Mammary epithelial cell (primary cell): ENCODE measurements at regions of chr10 and their contacts with region 1.

Region 1: DNA sequence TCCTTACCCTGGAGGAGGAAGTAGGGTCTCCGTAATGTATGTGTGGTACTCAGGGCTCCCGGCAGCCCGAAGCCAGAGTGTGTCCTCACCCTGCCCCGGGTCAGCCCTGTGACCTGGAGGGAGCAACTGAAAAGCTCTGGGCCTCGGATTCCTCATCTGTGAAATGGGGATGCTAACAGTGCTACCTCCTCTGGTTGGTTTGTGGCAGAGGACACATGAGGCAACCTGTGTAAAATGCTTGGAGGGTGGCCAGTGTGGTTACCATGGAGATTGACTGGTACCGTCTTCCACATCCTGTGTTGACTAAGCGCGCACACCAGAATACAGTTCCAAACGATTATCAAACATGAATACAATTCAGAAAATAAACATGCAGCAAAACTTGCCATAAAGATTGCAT is 163.8 kb upstream of the KLF6 start:
- DNase-seq: peak; percentile 33
- H3K4me3 ChIP-seq: no peak overlapping the region
- H3K27ac ChIP-seq: no peak overlapping the region
- H3K4me1 ChIP-seq: peaks cover 7% of the 10 kb centered on the region
- H3K27me3 ChIP-seq: no peaks in the 10 kb centered on the region
- CTCF ChIP-seq: no peak

Region 2: GRCh38 chr10:4067531-4067930 is 118.7 kb after region 1 on chr10:
- CTCF ChIA-PET with region 1: no interaction called
- dilution Hi-C with region 1: no loop called
- in situ Hi-C with region 1: no loop called
- intact Hi-C with region 1: loop called (anchors 10 kb)
- DNase-seq: no peak
- H3K4me3 ChIP-seq: no peak overlapping the region
- H3K27ac ChIP-seq: no peak overlapping the region
- H3K4me1 ChIP-seq: peaks cover 23% of the 10 kb centered on the region
- H3K27me3 ChIP-seq: no peaks in the 10 kb centered on the region
- CTCF ChIP-seq: no peak